HEK293T (cell line): ENCODE measurements at regions of chr14 and their contacts with region 1.

Region 1: DNA sequence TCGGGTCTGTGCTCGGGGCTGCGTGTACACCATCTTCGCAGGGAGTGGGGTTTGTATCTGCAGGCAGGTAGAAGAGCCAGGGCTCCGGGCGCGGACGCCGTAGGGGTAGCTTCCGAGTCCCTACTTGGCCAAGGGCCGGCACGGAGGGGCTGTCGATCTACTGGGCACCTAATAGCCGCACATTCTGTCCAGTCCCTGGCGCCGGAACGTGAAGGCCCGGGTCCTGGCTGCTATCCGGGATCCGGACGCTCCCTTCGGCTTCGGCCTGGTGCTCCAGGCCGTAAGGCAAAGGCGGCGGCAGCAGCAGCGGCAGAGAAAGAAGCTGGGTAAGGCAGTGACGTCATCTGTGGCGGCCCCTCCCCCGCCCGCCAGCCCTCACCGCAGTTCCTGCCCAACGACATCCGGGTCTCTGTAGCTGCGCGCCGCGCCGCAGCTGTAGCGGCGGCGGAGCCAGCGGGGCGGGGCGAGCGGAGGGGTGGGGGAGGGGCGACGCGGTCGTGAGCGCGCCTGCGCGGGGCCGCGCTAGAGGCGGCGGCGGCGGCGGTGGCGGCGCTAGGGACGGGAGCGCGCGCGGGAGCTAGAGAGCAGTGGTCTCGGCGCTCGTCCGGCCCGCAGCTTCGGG is at the start of gene PPM1A:
- DNase-seq: peak; percentile 94

Region 2: GRCh38 chr14:59847711-59848110 is 401.1 kb before region 1 on chr14:
- CTCF ChIA-PET with region 1: no interaction called
- POLR2A ChIA-PET with region 1: no interaction called
- DNase-seq: no peak

Region 3: GRCh38 chr14:60164712-60165546 is 83.9 kb before region 1 on chr14 and contains the start of gene DHRS7:
- CTCF ChIA-PET with region 1: interaction called, 6 read pairs
- POLR2A ChIA-PET with region 1: interaction called, 16 read pairs
- DNase-seq: peak; percentile 83

Region 4: GRCh38 chr14:60233253-60233652 is 15.6 kb before region 1 on chr14:
- CTCF ChIA-PET with region 1: no interaction called
- POLR2A ChIA-PET with region 1: interaction called, 10 read pairs
- DNase-seq: no peak

Region 5: DNA sequence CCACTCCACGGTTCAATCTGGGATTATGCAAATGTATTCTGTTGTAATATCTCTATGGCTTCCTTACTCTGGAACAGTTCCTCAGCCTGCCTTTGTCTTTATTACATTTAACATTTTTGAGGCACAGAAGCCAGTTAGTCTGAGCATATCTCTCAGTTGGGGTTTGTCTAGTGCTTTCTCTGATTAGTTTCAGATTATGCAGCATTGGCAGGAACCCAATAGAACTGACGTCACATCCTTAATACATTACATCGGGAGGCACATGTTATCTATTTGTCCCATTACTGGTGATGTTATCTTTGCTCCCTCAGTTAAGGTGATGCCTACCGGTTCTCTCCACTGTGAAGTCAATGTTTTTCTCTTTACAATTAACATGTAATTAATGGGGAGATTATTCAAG is 62.6 kb after region 1 on chr14:
- CTCF ChIA-PET with region 1: no interaction called
- POLR2A ChIA-PET with region 1: interaction called, 13 read pairs
- DNase-seq: no peak